ENCODE measurements at regions of chr1 and their contacts with region 1.

Region 1: DNA sequence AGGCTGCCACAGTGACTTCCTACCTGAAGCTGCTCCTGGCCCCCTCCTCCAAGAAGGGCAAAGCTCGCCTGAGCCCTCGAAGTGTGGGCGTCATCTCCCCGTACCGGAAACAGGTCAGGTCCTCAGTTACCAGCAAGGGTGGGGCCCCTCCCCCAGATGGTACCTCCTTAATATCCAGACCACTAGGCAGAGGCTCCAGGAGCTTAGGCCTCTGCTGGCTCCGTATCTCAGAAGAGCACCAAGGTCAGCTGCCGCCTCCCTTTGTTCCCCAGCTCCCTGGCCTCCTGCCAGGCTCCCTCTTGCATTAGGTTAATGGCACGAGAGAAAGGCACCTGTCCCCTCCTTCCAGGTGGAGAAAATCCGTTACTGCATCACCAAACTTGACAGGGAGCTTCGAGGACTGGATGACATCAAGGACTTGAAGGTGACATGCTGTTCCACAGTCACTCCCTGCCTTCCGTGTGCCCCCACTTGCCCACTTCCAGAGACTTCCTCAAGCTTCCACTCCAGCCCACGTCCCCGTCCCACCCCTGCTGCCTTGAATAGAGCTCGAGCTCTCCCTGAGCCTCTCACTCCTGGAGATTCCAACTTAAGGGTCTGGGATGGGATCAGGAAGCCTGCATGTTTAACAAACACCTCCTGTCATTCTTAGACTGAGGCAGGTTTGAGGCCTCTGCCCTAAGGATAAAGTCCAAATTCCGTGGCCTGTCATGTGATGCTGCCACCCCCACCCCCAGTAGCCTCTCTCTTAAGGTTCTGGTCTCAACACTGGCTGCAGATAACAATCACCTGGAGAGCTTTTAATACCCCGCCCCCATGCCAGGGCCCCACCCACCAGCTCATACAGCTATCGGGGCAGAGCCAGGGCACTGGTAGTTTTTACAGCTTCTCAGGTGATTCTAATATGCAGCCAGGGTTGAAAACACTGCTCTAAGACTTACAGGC is 8.3 kb downstream of the RHOC start:
- DNase-seq: peak in 1 of 2 donors; percentile 65
- H3K4me3 ChIP-seq: no peak overlapping the region
- H3K27ac ChIP-seq: peak overlapping the region; percentile 86 to 99
- H3K4me1 ChIP-seq: peaks cover 11 to 32% of the 10 kb centered on the region in 2 donors
- H3K27me3 ChIP-seq: no peaks in the 10 kb centered on the region
- CTCF ChIP-seq: no peak
- POLR2A ChIP-seq: no peak

Region 2: GRCh38 chr1:112628516-112628915 is 70.1 kb before region 1 on chr1:
- intact Hi-C with region 1: loop called (anchors 2 kb)
- DNase-seq: no peak
- H3K4me3 ChIP-seq: no peak overlapping the region
- H3K27ac ChIP-seq: peak overlapping the region in 1 of 2 donors; percentile 46
- H3K4me1 ChIP-seq: no peaks in the 10 kb centered on the region
- H3K27me3 ChIP-seq: no peaks in the 10 kb centered on the region
- CTCF ChIP-seq: no peak
- POLR2A ChIP-seq: no peak

Region 3: DNA sequence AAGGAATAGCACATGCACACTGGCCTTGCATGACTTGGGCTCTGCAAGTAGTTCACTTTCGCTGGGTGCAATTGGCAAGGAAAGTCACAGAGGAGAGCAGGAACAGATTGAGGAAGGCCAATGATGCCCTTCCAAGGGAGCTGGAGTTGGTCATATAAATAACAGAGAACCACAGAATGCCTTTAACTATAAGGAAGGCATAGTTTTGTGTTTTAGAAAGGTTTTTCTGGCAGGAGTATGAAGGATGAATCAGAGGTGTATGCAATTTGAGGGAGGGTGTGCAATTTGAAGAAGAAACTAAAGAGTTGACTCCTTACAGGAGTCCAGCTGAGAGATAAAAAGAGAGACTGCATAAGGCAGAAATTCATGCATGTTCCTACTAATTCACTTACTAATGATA is 948.5 kb after region 1 on chr1:
- intact Hi-C with region 1: loop called (anchors 10 kb)
- DNase-seq: no peak
- H3K4me3 ChIP-seq: no peak overlapping the region
- H3K27ac ChIP-seq: no peak overlapping the region
- H3K4me1 ChIP-seq: no peaks in the 10 kb centered on the region
- H3K27me3 ChIP-seq: no peaks in the 10 kb centered on the region
- CTCF ChIP-seq: no peak
- POLR2A ChIP-seq: no peak

Measured in breast epithelium (tissue), 4 donors.